ENCODE measurements at regions of chr5 and their contacts with region 1.

Region 1: GRCh38 chr5:115586601-115587048 is 15.7 kb downstream of the TICAM2 start:
- DNase-seq: no peak
- ATAC-seq: peak; percentile 71
- H3K4me3 ChIP-seq: no peak overlapping the region
- H3K27ac ChIP-seq: no peak overlapping the region
- H3K4me1 ChIP-seq: peaks cover 12% of the 10 kb centered on the region; the same call in 1 of the 2 replicates
- H3K27me3 ChIP-seq: no peaks in the 10 kb centered on the region
- CTCF ChIP-seq: peak; percentile 9 to 60 (median 51); a peak in 5 of 6 replicates
- EP300 ChIP-seq: no peak
- POLR2A ChIP-seq: no peak
- RAD21 ChIP-seq: peak; percentile 81

Region 2: GRCh38 chr5:114903767-114904166 is 682.9 kb before region 1 on chr5:
- CTCF ChIA-PET with region 1: no interaction called
- POLR2A ChIA-PET with region 1: no interaction called
- RAD21 ChIA-PET with region 1: no interaction called
- SMC1A ChIA-PET with region 1: no interaction called
- in situ Hi-C with region 1: no loop called
- intact Hi-C with region 1: no loop called
- DNase-seq: no peak
- ATAC-seq: no peak
- H3K4me3 ChIP-seq: no peak overlapping the region
- H3K27ac ChIP-seq: no peak overlapping the region
- H3K4me1 ChIP-seq: no peaks in the 10 kb centered on the region
- H3K27me3 ChIP-seq: no peaks in the 10 kb centered on the region
- CTCF ChIP-seq: no peak
- EP300 ChIP-seq: no peak
- POLR2A ChIP-seq: no peak
- RAD21 ChIP-seq: no peak

Region 3: GRCh38 chr5:115098041-115098702 is 488.5 kb before region 1 on chr5:
- CTCF ChIA-PET with region 1: interaction called, 4 read pairs
- POLR2A ChIA-PET with region 1: no interaction called
- RAD21 ChIA-PET with region 1: no interaction called
- SMC1A ChIA-PET with region 1: no interaction called
- in situ Hi-C with region 1: no loop called
- intact Hi-C with region 1: loop called (anchors 1 kb)
- DNase-seq: peak; percentile 7
- ATAC-seq: peak; percentile 97
- H3K4me3 ChIP-seq: no peak overlapping the region
- H3K27ac ChIP-seq: no peak overlapping the region
- H3K4me1 ChIP-seq: no peaks in the 10 kb centered on the region
- H3K27me3 ChIP-seq: no peaks in the 10 kb centered on the region
- CTCF ChIP-seq: peak; percentile 77 to 85 (median 78)
- EP300 ChIP-seq: no peak
- POLR2A ChIP-seq: no peak
- RAD21 ChIP-seq: peak; percentile 81

Region 4: GRCh38 chr5:115389799-115390382 is 196.7 kb before region 1 on chr5:
- CTCF ChIA-PET with region 1: no interaction called
- POLR2A ChIA-PET with region 1: no interaction called
- RAD21 ChIA-PET with region 1: interaction called, 3 read pairs
- SMC1A ChIA-PET with region 1: no interaction called
- in situ Hi-C with region 1: no loop called
- intact Hi-C with region 1: loop called (anchors 5 kb)
- DNase-seq: no peak
- ATAC-seq: peak; percentile 49; the same call in 1 of the 3 replicates
- H3K4me3 ChIP-seq: no peak overlapping the region
- H3K27ac ChIP-seq: no peak overlapping the region
- H3K4me1 ChIP-seq: peaks cover 4% of the 10 kb centered on the region; the same call in 1 of the 2 replicates
- H3K27me3 ChIP-seq: no peaks in the 10 kb centered on the region
- CTCF ChIP-seq: peak in 2 of 3 experiments; percentile 21 to 22; a peak in 3 of 6 replicates
- EP300 ChIP-seq: no peak
- POLR2A ChIP-seq: no peak
- RAD21 ChIP-seq: peak; percentile 57

Region 5: DNA sequence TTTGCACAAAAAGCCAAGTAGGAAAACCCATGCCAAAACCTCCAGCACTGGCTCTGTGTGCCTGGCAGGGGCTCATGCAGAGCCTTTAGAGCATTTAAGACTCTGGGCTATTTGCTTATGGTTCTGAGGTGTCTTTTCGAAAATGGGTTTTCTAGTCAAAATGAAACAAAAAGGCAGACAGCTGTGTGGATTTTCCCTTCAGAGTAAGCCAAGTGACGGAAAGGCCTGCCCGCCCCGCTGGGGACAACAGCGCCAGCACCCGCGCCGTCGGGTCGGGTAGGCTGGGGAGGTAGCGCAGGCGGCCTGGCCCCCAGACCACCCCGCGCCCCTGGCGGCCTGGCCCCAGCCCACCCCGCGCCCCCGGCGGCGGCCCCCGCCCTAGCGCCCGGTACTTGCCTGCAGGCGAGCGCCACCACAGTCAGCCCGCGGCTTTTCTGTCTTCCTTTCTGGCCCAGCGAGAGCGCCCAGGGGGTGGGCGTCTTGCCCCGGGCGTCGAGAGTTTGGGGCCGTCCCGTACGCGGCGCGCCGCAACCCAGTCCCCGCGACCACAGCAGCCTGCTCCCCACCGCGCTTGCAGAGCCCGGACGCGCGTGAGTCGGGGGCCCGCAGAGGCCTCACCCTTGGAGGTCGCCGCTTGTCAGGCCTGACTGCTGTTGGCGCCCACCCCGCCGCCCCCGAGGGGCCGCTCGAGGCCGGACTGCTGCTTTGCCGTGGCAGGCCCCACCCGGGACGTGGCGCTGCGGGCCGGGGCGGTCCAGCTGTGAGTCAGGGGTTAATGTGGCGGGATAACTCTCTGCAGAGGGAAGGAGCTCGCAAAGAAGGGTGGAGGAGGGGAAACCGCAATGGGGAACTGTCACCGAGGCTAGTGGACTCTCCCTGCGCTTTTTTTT is 15.3 kb after region 1 on chr5 and contains the start of gene TICAM2:
- CTCF ChIA-PET with region 1: interaction called, 18 read pairs
- POLR2A ChIA-PET with region 1: interaction called, 7 read pairs
- RAD21 ChIA-PET with region 1: interaction called, 22 read pairs
- SMC1A ChIA-PET with region 1: interaction called, 48 read pairs
- in situ Hi-C with region 1: no loop called
- intact Hi-C with region 1: no loop called
- DNase-seq: peak; percentile 77
- ATAC-seq: peak; percentile 87
- H3K4me3 ChIP-seq: peak within 1 kb of the TSS; percentile 85
- H3K27ac ChIP-seq: peak within 1 kb of the TSS; percentile 94
- H3K4me1 ChIP-seq: peaks cover 22% of the 10 kb centered on the region
- H3K27me3 ChIP-seq: no peaks in the 10 kb centered on the region
- CTCF ChIP-seq: peak in 2 of 3 experiments; percentile 4 to 21; a peak in 1 of 6 replicates
- EP300 ChIP-seq: peak; percentile 66 to 76
- POLR2A ChIP-seq: peak; percentile 88
- RAD21 ChIP-seq: no peak
- polyA plus RNA-seq, gene TICAM2: 1.8 to 2.3 TPM

Region 6: DNA sequence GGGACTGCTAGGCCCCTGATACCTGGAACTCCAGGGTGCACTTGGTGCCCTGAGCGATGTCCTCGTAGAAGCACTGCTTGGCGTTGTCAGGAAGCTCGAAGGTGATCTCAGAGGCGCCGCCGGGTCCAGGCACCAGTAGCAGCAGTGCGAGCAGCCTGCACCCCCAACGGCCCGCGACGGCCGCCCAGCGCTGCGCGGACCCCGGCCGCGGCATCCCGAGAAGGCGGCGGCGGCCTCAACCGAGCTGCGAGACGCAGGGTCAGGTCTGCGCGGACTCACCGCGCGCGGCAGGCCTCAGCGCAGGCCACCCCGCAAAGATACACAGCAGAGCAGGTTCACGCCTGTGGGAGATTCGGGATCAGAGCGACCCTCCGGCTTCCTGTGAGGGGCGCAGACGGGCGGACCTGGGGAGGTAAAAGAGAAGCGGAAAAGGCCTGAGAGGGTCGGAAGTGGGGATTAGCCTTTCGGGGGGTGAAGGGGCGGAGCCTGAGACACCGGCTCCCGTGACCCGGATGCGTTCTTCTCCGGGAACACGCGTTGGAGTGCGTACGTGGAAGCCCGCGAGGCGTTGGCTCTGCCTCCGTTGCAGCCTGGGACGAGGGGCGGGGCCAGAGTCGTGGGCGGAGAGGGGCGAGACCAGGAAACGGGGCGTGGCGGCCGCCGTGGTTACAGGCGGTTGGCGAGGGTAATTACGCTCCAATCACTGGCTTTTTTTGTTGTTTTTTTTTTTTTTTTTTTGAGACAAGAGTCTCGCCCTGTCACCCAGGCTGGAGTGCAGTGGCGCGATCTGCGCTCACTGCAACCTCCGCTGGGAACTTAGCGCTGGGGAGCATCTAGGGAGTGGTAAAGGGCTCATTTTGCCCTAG is 39.2 kb after region 1 on chr5 and contains the start of gene TMED7:
- CTCF ChIA-PET with region 1: interaction called, 10 read pairs
- POLR2A ChIA-PET with region 1: interaction called, 5 read pairs
- RAD21 ChIA-PET with region 1: interaction called, 6 read pairs
- SMC1A ChIA-PET with region 1: interaction called, 4 read pairs
- in situ Hi-C with region 1: no loop called
- intact Hi-C with region 1: no loop called
- DNase-seq: peak; percentile 95
- ATAC-seq: peak; percentile 93
- H3K4me3 ChIP-seq: peak within 1 kb of the TSS; percentile 91
- H3K27ac ChIP-seq: peak within 1 kb of the TSS; percentile 86
- H3K4me1 ChIP-seq: peaks cover 5% of the 10 kb centered on the region; the same call in 1 of the 2 replicates
- H3K27me3 ChIP-seq: no peaks in the 10 kb centered on the region
- CTCF ChIP-seq: no peak
- EP300 ChIP-seq: peak in 1 of 2 experiments; percentile 48; a peak in 2 of 4 replicates
- POLR2A ChIP-seq: peak; percentile 86
- RAD21 ChIP-seq: no peak
- polyA plus RNA-seq, gene TMED7: 8.0 to 10.3 TPM

Measured in GM12878 (cell line).